Endothelial cell of umbilical vein (primary cell): ENCODE measurements at regions of chr11 and their contacts with region 1.

Region 1: DNA sequence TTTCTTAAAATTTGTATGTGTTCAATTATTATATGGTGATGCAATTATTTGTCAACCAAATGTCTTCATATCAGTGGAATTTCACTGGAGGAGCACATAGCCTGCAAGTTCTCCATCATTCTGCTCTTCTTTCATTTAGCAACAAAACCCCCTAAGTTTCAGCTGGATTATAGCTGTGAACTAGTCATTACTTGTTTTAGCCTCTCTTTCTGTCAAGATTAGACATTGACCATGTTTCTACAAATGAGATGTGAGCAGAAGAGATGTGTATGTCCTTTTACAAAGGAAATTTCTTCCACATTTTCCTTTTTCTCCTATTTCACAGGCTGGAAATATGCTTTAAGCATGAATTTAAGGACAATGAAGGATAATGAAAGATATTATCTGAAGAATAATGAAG is 9.2 kb upstream of the NOX4 start:
- DNase-seq: no peak
- H3K4me3 ChIP-seq: no peak overlapping the region
- H3K27ac ChIP-seq: no peak overlapping the region
- H3K4me1 ChIP-seq: peaks cover 17% of the 10 kb centered on the region
- H3K27me3 ChIP-seq: no peaks in the 10 kb centered on the region
- CTCF ChIP-seq: no peak
- POLR2A ChIP-seq: no peak

Region 2: GRCh38 chr11:89136606-89137005 is 363.7 kb before region 1 on chr11:
- CTCF ChIA-PET with region 1: no interaction called
- POLR2A ChIA-PET with region 1: no interaction called
- dilution Hi-C with region 1: no loop called
- intact Hi-C with region 1: no loop called
- DNase-seq: no peak
- H3K4me3 ChIP-seq: no peak overlapping the region
- H3K27ac ChIP-seq: no peak overlapping the region
- H3K4me1 ChIP-seq: no peaks in the 10 kb centered on the region
- H3K27me3 ChIP-seq: no peaks in the 10 kb centered on the region
- CTCF ChIP-seq: no peak
- POLR2A ChIP-seq: no peak

Region 3: DNA sequence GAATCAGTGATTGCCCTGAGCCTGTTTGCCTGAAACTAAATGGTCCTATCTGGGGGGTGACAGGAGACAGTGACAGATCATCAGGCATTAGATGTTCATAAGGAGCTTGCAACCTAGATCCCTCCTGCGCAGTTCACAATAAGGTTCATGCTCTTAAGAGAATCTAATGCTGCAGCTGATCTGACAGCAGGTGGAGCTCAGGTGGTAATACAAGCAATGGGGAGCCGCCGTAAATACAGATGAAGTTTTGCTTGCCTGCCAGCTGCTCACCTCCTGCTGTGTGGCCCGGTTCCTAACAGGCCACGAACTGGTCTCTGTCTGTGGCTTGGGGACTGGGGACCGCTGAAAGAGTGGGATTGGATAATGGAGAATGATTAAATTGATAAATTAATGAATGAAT is 23.2 kb before region 1 on chr11:
- CTCF ChIA-PET with region 1: no interaction called
- POLR2A ChIA-PET with region 1: no interaction called
- dilution Hi-C with region 1: no loop called
- intact Hi-C with region 1: no loop called
- DNase-seq: no peak
- H3K4me3 ChIP-seq: no peak overlapping the region
- H3K27ac ChIP-seq: no peak overlapping the region
- H3K4me1 ChIP-seq: no peaks in the 10 kb centered on the region
- H3K27me3 ChIP-seq: no peaks in the 10 kb centered on the region
- CTCF ChIP-seq: no peak
- POLR2A ChIP-seq: no peak

Region 4: DNA sequence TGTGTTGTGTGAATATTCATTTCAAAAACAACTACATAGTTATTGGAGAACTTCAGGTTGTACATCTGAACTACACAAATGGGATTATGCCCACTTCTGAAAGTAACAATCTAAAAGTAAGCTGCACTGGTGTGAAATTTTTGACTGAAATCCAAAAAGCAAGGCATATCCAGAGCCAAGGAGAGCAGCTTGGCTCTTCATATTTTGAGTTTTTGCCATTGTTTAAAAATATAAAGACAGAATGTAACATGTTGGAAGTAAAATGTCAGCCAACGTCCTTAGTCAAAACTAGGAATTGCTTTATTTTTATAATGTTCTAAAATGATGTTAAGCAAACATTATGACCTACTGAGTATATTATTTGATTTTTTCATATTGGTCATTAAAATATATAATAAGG is 36.6 kb after region 1 on chr11:
- CTCF ChIA-PET with region 1: no interaction called
- POLR2A ChIA-PET with region 1: interaction called, 10 read pairs
- dilution Hi-C with region 1: no loop called
- intact Hi-C with region 1: no loop called
- DNase-seq: no peak
- H3K4me3 ChIP-seq: no peak overlapping the region
- H3K27ac ChIP-seq: no peak overlapping the region
- H3K4me1 ChIP-seq: no peaks in the 10 kb centered on the region
- H3K27me3 ChIP-seq: no peaks in the 10 kb centered on the region
- CTCF ChIP-seq: no peak
- POLR2A ChIP-seq: no peak